Breast epithelium (tissue), 4 donors: ENCODE measurements at regions of chr2 and their contacts with region 1.

Region 1: GRCh38 chr2:172804423-172804822 is 68.8 kb downstream of the RAPGEF4 start:
- DNase-seq: no peak
- H3K4me3 ChIP-seq: no peak overlapping the region
- H3K27ac ChIP-seq: no peak overlapping the region
- H3K4me1 ChIP-seq: no peaks in the 10 kb centered on the region
- H3K27me3 ChIP-seq: no peaks in the 10 kb centered on the region
- CTCF ChIP-seq: no peak
- POLR2A ChIP-seq: no peak

Region 2: DNA sequence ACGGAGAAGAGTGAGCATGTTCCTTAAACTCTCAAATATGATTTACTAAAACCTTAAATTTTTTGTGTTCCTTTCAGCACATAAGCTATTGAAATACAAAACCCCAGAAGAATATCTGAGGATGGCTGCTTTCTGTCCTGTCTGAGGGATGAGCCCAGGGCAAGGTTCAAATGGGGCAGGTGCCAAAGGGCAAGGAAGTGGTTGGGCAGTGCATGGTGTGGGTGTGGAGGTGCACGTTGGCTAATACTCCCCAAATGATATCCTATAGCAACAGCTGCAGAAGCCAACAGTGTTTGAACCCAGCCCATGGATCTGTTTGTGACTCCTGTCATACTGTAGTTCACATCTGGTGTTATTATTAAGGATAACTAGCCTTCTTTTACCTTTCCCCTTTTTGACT is 733.3 kb after region 1 on chr2:
- intact Hi-C with region 1: no loop called
- DNase-seq: no peak
- H3K4me3 ChIP-seq: no peak overlapping the region
- H3K27ac ChIP-seq: no peak overlapping the region
- H3K4me1 ChIP-seq: no peaks in the 10 kb centered on the region
- H3K27me3 ChIP-seq: no peaks in the 10 kb centered on the region
- CTCF ChIP-seq: no peak
- POLR2A ChIP-seq: no peak

Region 3: GRCh38 chr2:174682578-174683391 is 1878.4 kb after region 1 on chr2:
- intact Hi-C with region 1: loop called (anchors 5 kb)
- DNase-seq: no peak
- H3K4me3 ChIP-seq: peak overlapping the region; percentile 87 to 97 (median 87)
- H3K27ac ChIP-seq: peak overlapping the region; percentile 80 to 90
- H3K4me1 ChIP-seq: no peaks in the 10 kb centered on the region
- H3K27me3 ChIP-seq: no peaks in the 10 kb centered on the region
- CTCF ChIP-seq: no peak
- POLR2A ChIP-seq: no peak